ENCODE measurements at regions of chr4 and their contacts with region 1.

Region 1: GRCh38 chr4:15811703-15812337 is 33.7 kb downstream of the CD38 start:
- DNase-seq: no peak
- H3K4me3 ChIP-seq: no peak overlapping the region
- H3K27ac ChIP-seq: no peak overlapping the region
- H3K4me1 ChIP-seq: no peaks in the 10 kb centered on the region
- H3K27me3 ChIP-seq: no peaks in the 10 kb centered on the region
- CTCF ChIP-seq: no peak
- EP300 ChIP-seq: no peak
- POLR2A ChIP-seq: no peak

Region 2: GRCh38 chr4:15882675-15883086 is 70.9 kb after region 1 on chr4:
- intact Hi-C with region 1: loop called (anchors 2 kb)
- DNase-seq: no peak
- H3K4me3 ChIP-seq: no peak overlapping the region
- H3K27ac ChIP-seq: no peak overlapping the region
- H3K4me1 ChIP-seq: peaks cover 0 to 16% (median 6%) of the 10 kb centered on the region in 4 donors
- H3K27me3 ChIP-seq: no peaks in the 10 kb centered on the region
- CTCF ChIP-seq: peak; percentile 85 to 95 (median 86)
- EP300 ChIP-seq: no peak
- POLR2A ChIP-seq: no peak

Region 3: GRCh38 chr4:16582532-16582931 is 770.7 kb after region 1 on chr4:
- intact Hi-C with region 1: no loop called
- DNase-seq: no peak
- H3K4me3 ChIP-seq: no peak overlapping the region
- H3K27ac ChIP-seq: no peak overlapping the region
- H3K4me1 ChIP-seq: no peaks in the 10 kb centered on the region
- H3K27me3 ChIP-seq: no peaks in the 10 kb centered on the region
- CTCF ChIP-seq: no peak
- EP300 ChIP-seq: no peak
- POLR2A ChIP-seq: no peak

Measured in esophagus muscularis mucosa (tissue), 4 donors.